AG04449 (cell line): ENCODE measurements at regions of chr9 and their contacts with region 1.

Region 1: DNA sequence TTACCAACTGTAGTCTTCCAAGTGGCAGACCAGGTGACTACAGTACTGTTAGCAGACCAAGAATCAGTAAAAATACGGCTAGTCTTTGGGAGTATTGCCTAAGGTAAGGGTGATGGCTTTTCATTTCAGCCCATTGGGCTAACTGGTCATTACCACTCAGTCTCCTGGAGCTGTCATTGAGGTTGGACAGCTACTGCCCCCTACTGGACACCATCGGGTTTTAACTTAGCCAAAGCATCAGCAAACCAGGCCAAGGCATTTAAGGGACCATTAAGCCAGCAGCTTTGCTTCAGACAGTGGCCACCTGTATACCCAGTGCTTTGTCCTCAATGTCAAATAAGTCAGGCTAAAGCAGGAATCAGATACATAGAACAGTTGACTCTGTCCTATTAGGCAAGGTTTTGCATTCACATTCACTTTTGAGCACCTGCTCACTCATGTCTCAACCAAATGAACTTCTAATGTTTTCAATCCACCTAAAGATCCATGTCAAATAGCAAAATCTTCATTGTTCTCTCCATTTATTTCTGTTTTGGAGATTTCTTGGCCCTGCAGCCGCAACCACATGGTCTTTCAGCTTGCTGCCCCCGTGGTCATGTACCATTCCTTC is 117.2 kb downstream of the INVS start:
- DNase-seq: no peak
- H3K4me3 ChIP-seq: no peak overlapping the region
- CTCF ChIP-seq: peak; percentile 42

Region 2: DNA sequence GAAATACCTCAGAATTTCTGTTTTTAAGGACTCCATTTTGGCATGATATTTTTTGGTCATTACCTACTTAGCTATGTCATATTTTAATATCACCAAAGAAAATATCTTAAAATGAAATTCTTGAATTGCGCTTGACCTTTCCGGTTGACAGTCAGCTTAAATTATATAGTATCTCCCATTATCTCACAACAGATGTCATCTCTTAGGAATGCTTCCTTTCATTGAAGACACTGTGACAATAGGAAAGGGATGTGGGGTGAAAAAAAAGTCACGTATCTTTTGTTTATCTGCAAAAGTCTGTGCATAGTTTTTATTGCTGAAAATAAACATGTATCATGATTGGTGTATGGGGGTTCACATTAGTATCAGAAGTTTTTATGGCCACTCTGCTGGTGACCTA is 11.5 kb before region 1 on chr9:
- CTCF ChIA-PET with region 1: interaction called, 11 read pairs
- POLR2A ChIA-PET with region 1: no interaction called
- DNase-seq: no peak
- H3K4me3 ChIP-seq: no peak overlapping the region
- CTCF ChIP-seq: no peak